Left cardiac atrium (tissue), 4 donors: ENCODE measurements at regions of chr1 and their contacts with region 1.

Region 1: GRCh38 chr1:150321826-150322166 is 463 bp downstream of the PRPF3 start:
- DNase-seq: no peak
- ATAC-seq: no peak

Region 2: DNA sequence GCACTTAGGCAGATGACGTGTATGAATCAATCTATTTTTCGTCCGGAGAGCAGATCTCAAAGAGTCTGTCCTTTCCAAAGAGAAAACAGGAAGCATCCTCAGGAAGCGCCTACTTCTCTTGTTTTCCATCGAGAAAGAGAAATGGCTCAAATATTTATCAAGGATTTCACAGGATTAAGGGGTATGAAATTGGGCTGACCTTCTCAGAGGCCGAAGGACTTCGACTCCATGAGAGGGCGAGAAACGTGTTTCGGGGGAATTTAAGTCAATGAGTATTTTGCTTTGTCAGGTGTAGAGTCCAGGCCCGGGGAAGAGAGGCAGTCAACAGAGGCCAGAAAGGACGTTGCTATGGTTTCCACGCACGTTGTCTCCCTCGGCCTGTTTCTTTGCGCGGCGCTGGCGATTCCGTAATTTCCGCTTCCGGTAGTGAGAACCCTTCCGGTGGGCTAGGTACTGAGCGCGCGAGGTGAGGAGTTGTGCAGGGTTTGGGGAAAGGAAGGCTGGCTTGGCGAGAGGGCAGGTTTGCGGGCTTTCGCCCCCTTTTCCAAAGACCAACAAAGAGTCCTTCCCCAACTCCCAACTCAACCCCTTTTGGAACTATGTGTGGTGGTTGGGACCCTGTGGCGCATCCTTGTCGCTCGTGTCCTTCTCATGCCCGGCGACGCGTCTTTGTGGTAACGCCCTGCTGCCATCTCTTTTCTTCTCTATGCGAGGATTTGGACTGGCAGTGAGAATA is 28.2 kb before region 1 on chr1 and contains the start of gene MRPS21:
- intact Hi-C with region 1: loop called in 1 of 2 experiments (anchors 2 kb)
- DNase-seq: peak; percentile 93
- ATAC-seq: peak; percentile 99
- total RNA-seq, gene MRPS21: 72.6 to 74.3 TPM

Region 3: DNA sequence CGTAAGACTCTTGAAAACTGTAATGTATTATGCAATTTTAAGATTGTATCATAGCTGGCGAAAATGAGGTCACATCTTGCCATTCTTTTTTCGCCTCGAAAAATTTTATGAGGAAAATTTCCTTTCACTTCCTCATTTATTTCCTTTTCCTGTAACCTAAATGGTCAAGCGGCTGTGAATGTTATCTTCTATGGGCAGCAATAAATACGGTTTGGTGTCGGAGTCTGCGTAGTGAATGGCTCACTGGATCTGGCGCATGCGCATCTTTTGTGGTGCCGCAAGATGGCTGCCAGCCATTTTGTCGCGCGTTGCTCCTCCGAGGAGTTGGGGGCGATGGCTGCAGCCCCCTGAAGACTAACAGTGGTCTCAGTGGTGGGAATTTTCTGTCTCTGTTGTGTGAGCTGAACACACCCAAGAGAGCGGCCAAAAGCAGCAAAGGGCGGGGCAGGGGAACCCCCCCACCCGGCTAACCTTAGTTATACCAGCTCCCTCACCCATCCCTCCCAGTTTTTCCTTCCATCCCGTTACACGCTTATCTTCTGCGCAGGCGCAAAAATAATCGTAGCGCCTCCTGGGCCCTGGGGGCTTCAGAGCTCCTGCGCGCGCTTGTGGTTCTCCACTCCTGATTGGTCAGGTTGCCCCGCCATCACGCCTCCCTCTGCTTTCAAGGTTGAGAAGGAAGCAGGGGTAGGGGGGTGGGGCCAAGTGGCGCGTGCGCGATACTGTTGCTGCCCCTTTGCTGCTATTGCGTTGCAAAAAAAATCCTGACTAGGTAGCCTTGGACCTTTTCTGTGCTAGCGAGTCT is 41.8 kb after region 1 on chr1 and contains the start of gene RPRD2:
- intact Hi-C with region 1: loop called in 1 of 2 experiments (anchors 5 kb)
- DNase-seq: peak; percentile 100
- ATAC-seq: peak; percentile 99
- total RNA-seq, gene RPRD2: 22.5 to 24.3 TPM